ACHN (cell line): ENCODE measurements at regions of chr1 and their contacts with region 1.

Region 1: GRCh38 chr1:84433258-84434080 is 35.2 kb downstream of the DNASE2B start:
- DNase-seq: peak; percentile 65

Region 2: DNA sequence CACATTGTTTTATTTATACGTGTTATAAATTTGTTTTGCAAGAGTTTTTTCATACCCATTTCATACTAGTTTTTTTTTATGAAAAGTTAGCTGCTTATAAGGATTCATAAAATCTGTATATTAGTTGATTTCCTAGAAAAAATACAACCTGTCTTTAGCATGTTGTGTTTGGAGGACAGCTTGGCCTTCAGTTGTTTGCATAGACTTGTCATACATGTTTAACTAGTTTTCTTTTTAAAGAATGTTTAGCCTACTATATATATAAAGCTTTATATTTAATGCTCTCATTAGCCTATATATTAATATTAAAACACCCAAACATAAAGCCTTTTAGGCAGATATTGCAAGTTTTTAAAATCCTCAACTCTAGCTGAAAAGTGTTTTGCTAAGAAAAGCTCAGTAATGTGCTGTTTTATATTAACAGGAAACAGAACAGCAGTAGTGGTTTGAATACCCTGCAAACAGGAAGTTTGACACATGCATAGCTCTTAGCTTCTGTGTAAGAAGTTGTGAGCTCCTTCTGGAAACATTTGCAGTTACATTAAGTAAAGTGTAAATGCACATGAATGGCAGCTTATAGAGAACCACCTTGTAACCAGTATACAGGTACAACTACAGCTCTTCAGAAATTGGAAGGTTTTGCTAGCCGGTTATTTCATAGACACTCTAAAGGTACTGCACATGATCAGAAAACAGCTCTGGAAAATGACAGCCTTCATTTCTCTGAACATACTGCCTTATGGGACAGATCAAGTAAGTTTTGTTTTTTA is 289.5 kb before region 1 on chr1 and contains the start of gene PRKACB:
- in situ Hi-C with region 1: loop called (anchors 10 kb)
- DNase-seq: peak; percentile 60

Region 3: DNA sequence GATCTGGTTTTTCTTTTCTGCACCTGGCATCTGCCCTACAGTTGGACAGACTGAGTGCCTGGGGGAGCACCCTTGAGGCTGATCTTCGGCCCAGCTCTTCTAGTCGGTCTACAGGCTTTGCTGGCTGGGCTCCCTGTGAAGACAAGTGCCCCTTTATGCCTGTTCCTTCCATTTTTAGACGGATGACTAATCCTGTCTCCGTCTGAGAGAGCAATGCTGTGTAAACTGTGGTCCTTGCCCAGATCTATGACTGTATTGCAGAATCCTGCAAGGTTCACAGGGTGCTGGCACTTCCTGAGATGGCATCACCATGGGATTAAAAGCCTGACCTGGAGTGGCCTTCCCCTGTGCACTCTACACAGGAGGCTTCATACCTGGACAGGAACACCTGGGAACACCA is 179.6 kb before region 1 on chr1:
- in situ Hi-C with region 1: no loop called
- DNase-seq: peak; percentile 78